ENCODE measurements at regions of chr17 and their contacts with region 1.

Region 1: DNA sequence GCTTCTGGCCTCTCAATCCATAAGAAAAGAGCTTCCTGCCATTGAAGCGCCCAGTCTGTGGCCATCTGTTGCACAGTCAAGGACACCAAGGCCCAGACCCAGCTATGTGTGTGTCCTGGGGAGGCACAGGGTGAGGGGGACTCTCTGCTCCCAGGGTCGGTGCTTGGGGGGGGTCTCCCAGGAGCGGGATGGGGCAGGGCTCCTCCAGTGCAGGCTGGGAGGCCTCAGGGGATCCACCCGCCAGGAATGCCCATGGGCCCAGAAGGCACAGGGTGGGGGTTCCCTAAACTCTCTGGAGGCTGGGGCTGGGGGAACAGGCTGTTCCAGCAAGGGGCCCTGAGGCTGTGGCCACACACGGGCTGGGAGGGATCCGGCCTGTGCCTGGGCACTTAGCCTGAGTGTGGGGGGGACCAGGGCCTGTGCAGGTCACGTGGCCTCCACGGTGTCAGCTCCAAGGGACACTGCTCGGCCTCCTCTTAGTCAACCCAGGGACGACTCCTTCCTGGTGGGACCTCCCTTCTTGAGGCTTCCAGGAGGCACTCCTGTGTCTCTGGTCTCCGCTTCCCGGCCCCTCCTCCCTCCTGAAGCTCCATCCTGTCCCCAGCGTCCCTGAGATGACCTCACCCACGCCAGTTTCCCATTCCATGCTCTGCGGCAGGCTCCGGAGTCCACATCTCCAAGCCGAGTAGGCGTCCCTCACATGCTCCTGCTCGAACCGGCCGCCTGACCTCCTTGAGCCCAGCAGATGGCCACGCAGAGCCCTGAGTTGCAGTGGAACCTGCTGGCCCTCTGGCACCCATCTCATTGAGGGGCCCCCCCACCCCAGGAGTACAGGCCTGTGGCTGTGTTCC is 23.1 kb upstream of the BAHCC1 start:
- DNase-seq: peak; percentile 91
- H3K4me3 ChIP-seq: no peak overlapping the region
- H3K27ac ChIP-seq: no peak overlapping the region
- H3K4me1 ChIP-seq: peaks cover 0 to 4% of the 10 kb centered on the region in 2 experiments; a peak in 1 of 4 replicates
- H3K27me3 ChIP-seq: peaks cover 16% of the 10 kb centered on the region; the same call in 1 of the 2 replicates
- CTCF ChIP-seq: peak; percentile 69
- EP300 ChIP-seq: no peak
- RAD21 ChIP-seq: peak; percentile 77

Region 2: GRCh38 chr17:81277421-81277820 is 94.7 kb before region 1 on chr17:
- CTCF ChIA-PET with region 1: no interaction called
- POLR2A ChIA-PET with region 1: no interaction called
- DNase-seq: peak; percentile 99
- H3K4me3 ChIP-seq: no peak overlapping the region
- H3K27ac ChIP-seq: peak overlapping the region in 1 of 2 experiments; percentile 77; a peak in 2 of 4 replicates
- H3K4me1 ChIP-seq: peaks cover 0 to 21% of the 10 kb centered on the region in 2 experiments; a peak in 1 of 4 replicates
- H3K27me3 ChIP-seq: no peaks in the 10 kb centered on the region
- CTCF ChIP-seq: no peak
- EP300 ChIP-seq: peak in 1 of 2 experiments; percentile 61; a peak in 1 of 4 replicates
- RAD21 ChIP-seq: peak; percentile 30; the same call in 1 of the 2 replicates

Region 3: GRCh38 chr17:81349397-81350319 is 22.5 kb before region 1 on chr17:
- CTCF ChIA-PET with region 1: interaction called, 15 read pairs
- POLR2A ChIA-PET with region 1: no interaction called
- DNase-seq: no peak
- H3K4me3 ChIP-seq: no peak overlapping the region
- H3K27ac ChIP-seq: no peak overlapping the region
- H3K4me1 ChIP-seq: peaks cover 0 to 14% of the 10 kb centered on the region in 2 experiments; a peak in 2 of 4 replicates
- H3K27me3 ChIP-seq: no peaks in the 10 kb centered on the region
- CTCF ChIP-seq: no peak
- EP300 ChIP-seq: no peak
- RAD21 ChIP-seq: no peak

Region 4: GRCh38 chr17:81385320-81386111 is 13.4 kb after region 1 on chr17:
- CTCF ChIA-PET with region 1: interaction called, 34 read pairs
- POLR2A ChIA-PET with region 1: no interaction called
- DNase-seq: no peak
- H3K4me3 ChIP-seq: no peak overlapping the region
- H3K27ac ChIP-seq: no peak overlapping the region
- H3K4me1 ChIP-seq: peaks cover 6 to 38% of the 10 kb centered on the region in 2 experiments; a peak in 2 of 4 replicates
- H3K27me3 ChIP-seq: no peaks in the 10 kb centered on the region
- CTCF ChIP-seq: no peak
- EP300 ChIP-seq: no peak
- RAD21 ChIP-seq: no peak

Region 5: DNA sequence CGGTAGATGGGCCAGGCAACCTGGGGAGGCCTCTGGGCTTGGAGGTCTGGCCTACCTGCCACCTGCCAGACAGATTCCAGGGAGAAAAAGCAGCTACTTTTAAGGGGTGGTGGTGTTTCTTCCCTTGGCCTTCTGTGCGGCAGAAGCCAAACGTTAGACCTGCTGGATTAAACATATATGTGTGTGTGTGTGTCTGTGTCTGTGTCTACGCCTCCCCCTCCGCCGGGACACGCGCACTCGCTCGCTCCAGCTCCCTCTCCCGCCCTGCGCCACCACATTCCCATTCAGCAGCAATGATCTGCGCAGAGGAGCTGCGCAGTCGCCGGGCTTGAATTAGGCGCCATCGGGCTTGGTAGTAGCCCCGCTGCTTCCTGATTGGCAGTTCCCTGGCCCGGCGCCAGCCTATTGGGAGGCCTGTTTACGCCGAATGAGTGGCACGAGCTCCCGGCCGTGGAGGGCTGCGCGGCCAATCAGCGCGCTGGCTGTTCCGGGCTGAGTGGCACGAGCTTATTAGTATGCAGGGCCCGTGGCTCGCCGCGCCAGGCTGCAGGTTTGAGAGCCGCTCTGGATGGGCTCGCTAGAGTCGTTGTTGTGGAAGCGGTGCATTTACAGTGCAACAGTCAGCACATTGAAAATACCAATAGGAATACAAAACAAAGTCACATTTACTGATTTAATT is 22.9 kb after region 1 on chr17 and contains the start of gene BAHCC1:
- CTCF ChIA-PET with region 1: interaction called, 31 read pairs
- POLR2A ChIA-PET with region 1: no interaction called
- DNase-seq: peak; percentile 97
- H3K4me3 ChIP-seq: peak within 1 kb of the TSS; percentile 60 to 80
- H3K27ac ChIP-seq: peak within 1 kb of the TSS; percentile 83 to 89
- H3K4me1 ChIP-seq: peaks cover 31 to 68% of the 10 kb centered on the region in 2 experiments
- H3K27me3 ChIP-seq: no peaks in the 10 kb centered on the region
- CTCF ChIP-seq: no peak
- EP300 ChIP-seq: peak in 1 of 2 experiments; percentile 51; a peak in 1 of 4 replicates
- RAD21 ChIP-seq: no peak; the same call in 1 of the 2 replicates
- polyA plus RNA-seq, gene BAHCC1: 3.6 and 6.4 TPM in 2 replicates

Measured in SK-N-SH (cell line).